GM12878 (cell line): ENCODE measurements at regions of chr1 and their contacts with region 1.

Region 1: DNA sequence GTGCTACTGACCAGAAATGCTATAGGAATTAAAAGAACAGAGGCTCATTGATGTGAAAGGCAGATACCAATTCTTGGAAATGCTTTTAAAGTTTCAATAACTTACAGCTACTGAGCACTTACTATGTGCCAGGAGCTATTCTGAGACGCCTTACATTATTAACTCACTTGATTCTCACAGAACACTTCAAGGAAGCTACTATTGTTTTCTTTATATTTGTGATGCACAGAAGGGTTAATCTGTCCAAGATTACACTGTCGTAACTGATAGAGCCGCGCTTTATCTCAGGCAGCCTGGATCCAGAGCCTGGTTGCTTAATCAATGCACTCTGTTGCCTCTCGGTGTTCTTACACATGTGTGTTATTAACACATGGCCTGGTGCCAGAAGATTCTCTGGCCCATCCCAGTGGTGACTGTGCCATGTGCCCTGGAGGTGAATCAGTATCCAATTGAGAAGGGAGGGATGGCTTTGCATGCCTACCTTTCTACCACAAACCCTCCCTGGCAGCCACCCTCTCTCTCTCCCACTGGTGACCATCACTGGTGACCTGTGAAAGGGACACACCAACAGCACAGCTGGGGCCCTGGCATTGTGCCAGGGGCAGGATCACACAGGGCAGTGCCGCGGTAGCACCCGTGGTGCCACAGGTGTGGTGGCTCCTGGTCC is 8.8 kb downstream of the FMO1 start:
- DNase-seq: no peak
- ATAC-seq: no peak
- H3K4me3 ChIP-seq: no peak overlapping the region
- H3K27ac ChIP-seq: no peak overlapping the region
- H3K4me1 ChIP-seq: peaks cover 7% of the 10 kb centered on the region
- H3K27me3 ChIP-seq: peaks cover 0 to 3% of the 10 kb centered on the region in 2 experiments; a peak in 2 of 4 replicates
- CTCF ChIP-seq: no peak
- EP300 ChIP-seq: no peak
- POLR2A ChIP-seq: no peak
- RAD21 ChIP-seq: no peak

Region 2: DNA sequence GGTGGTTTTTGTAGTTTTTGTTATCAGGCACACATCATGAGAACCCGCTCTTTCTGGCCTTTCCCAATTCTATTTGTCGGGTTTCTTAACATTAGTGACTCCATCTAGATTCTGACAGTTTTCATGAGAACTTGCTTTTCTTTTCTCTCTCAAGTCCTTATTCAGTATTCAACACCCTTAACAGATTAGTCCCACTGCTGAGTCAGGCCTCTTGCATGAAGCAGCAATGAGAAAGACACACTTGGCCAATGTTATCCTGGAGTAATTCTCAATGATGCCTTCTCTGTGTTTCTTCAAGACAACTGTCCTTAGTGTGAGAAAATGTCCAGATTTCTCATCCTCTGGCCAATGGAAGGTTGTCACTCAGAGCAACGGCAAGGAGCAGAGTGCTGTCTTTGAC is 60.7 kb before region 1 on chr1:
- CTCF ChIA-PET with region 1: no interaction called
- POLR2A ChIA-PET with region 1: no interaction called
- RAD21 ChIA-PET with region 1: no interaction called
- SMC1A ChIA-PET with region 1: no interaction called
- in situ Hi-C with region 1: no loop called
- intact Hi-C with region 1: no loop called
- DNase-seq: no peak
- ATAC-seq: no peak
- H3K4me3 ChIP-seq: no peak overlapping the region
- H3K27ac ChIP-seq: no peak overlapping the region
- H3K4me1 ChIP-seq: no peaks in the 10 kb centered on the region
- H3K27me3 ChIP-seq: no peaks in the 10 kb centered on the region
- CTCF ChIP-seq: no peak
- EP300 ChIP-seq: no peak
- POLR2A ChIP-seq: no peak
- RAD21 ChIP-seq: no peak

Region 3: GRCh38 chr1:171245458-171246064 is 11.5 kb before region 1 on chr1:
- CTCF ChIA-PET with region 1: interaction called, 18 read pairs
- POLR2A ChIA-PET with region 1: no interaction called
- RAD21 ChIA-PET with region 1: interaction called, 5 read pairs
- SMC1A ChIA-PET with region 1: interaction called, 6 read pairs
- in situ Hi-C with region 1: no loop called
- intact Hi-C with region 1: no loop called
- DNase-seq: no peak
- ATAC-seq: peak; percentile 88
- H3K4me3 ChIP-seq: no peak overlapping the region
- H3K27ac ChIP-seq: no peak overlapping the region
- H3K4me1 ChIP-seq: no peaks in the 10 kb centered on the region
- H3K27me3 ChIP-seq: 0 out of 4 replicates have a peak, but pooled peaks cover 0 to 3% of the 10 kb centered on the region in 2 experiments
- CTCF ChIP-seq: peak; percentile 67 to 90 (median 83)
- EP300 ChIP-seq: no peak
- POLR2A ChIP-seq: no peak
- RAD21 ChIP-seq: peak; percentile 49